ENCODE measurements at regions of chr6 and their contacts with region 1.

Region 1: DNA sequence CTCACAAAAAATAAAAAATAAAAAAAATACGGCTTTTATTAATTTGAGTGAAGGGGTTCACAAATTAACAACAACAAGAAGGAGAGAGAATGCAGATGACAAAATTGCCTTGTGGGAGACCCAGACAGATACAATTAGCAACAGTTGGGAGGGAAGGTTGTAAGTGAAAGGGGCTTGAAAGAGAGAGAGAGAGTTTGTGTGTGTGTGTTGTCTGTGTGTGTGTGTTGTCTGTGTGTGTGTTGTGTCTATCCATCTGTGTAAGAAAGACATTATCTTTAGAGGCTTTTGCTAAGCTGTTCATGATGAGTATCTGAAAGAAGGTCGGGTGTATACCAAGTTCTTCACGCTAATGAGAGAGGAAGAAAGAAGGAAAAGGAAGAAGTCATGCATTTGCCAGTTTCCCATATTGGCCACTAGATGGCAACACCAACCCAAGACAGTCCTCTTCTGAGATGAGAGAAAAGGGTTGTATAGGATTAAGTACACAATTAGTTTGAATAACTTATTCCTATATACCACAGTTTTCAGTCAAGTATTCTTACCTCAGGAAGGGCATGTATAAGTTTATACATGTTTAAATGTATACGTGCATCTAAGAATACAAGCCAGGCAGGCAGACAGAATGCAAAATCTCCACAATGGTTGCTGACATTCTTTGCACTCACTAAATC is 63.7 kb upstream of the CD2AP start:
- DNase-seq: no peak
- H3K4me3 ChIP-seq: peak overlapping the region; percentile 58
- H3K27ac ChIP-seq: peak overlapping the region; percentile 63
- H3K4me1 ChIP-seq: peaks cover 13% of the 10 kb centered on the region
- H3K27me3 ChIP-seq: no peaks in the 10 kb centered on the region
- CTCF ChIP-seq: peak; percentile 92

Region 2: GRCh38 chr6:47380251-47380650 is 33.6 kb before region 1 on chr6:
- intact Hi-C with region 1: no loop called
- DNase-seq: no peak
- H3K4me3 ChIP-seq: no peak overlapping the region
- H3K27ac ChIP-seq: no peak overlapping the region
- H3K4me1 ChIP-seq: no peaks in the 10 kb centered on the region
- H3K27me3 ChIP-seq: peaks cover 19% of the 10 kb centered on the region
- CTCF ChIP-seq: no peak

Region 3: GRCh38 chr6:47621838-47622449 is 208.1 kb after region 1 on chr6:
- intact Hi-C with region 1: loop called (anchors 10 kb)
- DNase-seq: no peak
- H3K4me3 ChIP-seq: no peak overlapping the region
- H3K27ac ChIP-seq: no peak overlapping the region
- H3K4me1 ChIP-seq: no peaks in the 10 kb centered on the region
- H3K27me3 ChIP-seq: no peaks in the 10 kb centered on the region
- CTCF ChIP-seq: no peak

Measured in left ventricle myocardium inferior (tissue), 1 donor.